HEK293 (cell line): ENCODE measurements at regions of chr17 and their contacts with region 1.

Region 1: DNA sequence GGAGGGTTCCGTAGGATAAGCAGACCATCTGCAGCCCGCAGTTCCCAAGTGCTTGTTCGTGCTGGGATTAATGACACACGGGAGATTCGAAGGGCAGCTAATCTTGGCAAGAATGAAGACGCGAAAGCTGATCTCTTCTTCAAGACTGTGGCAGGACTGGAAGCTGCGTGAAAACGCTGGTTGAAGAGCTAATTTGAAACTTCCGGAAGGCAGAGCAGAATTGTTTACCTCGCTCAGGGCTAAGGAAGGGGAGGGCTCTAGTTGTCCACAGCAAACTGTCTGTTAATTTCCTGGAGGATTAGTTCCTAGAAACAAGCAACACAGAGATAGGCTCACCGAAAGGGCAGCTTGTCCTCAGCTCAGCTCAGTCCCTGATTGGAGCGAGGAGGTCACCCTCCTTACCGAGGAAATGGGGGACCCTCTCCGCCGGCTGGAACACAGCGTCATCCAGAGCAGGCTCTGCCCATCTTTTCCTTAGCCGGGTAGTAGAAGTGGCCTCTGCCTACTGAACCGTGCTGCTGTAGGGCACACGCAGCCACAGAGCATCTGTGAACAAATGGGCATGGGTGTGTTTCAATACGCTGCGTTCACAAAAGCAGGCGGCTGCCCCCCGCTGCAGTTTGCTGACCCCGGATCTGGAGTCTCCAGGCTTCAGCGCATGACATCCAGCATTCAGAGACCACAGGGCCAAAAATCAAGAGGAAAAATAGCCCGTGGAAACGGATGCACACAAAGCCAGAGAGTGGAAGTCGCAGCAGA is 16.7 kb upstream of the BAIAP2 start:
- H3K4me3 ChIP-seq: no peak overlapping the region
- H3K27ac ChIP-seq: no peak overlapping the region
- H3K4me1 ChIP-seq: no peaks in the 10 kb centered on the region
- CTCF ChIP-seq: no peak

Region 2: GRCh38 chr17:80927791-80928216 is 90.4 kb before region 1 on chr17:
- CTCF ChIA-PET with region 1: no interaction called
- POLR2A ChIA-PET with region 1: no interaction called
- H3K4me3 ChIP-seq: no peak overlapping the region
- H3K27ac ChIP-seq: no peak overlapping the region
- H3K4me1 ChIP-seq: no peaks in the 10 kb centered on the region
- CTCF ChIP-seq: no peak

Region 3: DNA sequence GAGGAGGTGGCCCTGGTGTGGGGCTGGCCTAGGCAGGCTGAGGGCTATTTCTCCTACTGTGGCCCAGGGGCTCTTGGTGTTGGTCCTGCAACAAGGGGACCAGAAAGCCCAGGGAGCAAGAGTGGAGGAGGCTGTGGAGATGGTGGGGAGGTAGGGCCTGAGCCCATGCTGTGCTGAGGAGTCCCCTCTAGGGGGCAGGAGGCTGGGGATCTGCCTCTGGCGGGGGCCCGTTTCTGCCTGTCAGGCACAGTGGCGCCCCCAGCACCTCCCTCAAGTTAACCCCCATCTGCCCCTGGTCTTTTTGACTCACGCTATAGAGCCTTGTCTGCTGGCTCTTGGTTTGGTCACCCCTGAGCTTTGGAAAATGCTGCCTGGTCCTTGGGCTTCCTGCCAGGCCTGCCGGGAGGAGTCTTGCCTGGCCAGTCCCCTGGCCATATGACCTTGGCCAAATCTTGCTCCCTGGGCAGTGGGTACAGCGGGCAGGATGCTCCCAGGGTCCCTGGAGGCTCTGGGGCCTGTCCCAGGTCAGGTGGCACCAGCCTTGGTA is 22.6 kb after region 1 on chr17:
- CTCF ChIA-PET with region 1: interaction called, 11 read pairs
- POLR2A ChIA-PET with region 1: interaction called, 4 read pairs
- H3K4me3 ChIP-seq: no peak overlapping the region
- H3K27ac ChIP-seq: no peak overlapping the region
- H3K4me1 ChIP-seq: peaks cover 20% of the 10 kb centered on the region
- CTCF ChIP-seq: peak; percentile 78